Heart left ventricle (tissue), 16 donors: ENCODE measurements at regions of chr1 and their contacts with region 1.

Region 1: DNA sequence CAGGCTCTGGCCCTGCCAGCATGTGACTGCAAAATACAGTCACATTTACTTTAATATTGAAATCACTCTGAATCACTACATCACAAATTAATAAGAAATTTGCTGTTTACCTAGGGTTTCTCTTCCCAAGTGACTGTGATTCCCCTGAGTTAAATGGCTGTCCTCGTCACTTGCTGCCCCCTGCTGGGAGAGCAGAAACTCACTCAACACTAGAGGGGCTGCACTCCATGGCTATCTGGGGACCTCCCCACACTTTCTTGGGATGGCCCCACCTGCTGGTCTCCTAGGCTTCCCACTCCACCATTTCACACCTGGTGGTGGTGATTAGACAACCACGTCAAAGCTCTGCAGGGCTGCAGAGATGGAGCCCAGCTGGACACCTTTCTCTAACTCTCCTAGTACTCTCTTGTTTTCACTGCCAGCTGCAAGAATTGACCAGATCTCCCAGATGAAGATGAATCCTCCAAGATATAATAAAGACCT is 63.4 kb downstream of the CD2 start:
- DNase-seq: no peak
- ATAC-seq: peak in 1 of 4 donors; percentile 49
- H3K4me3 ChIP-seq: no peak overlapping the region
- H3K27ac ChIP-seq: no peak overlapping the region
- H3K4me1 ChIP-seq: peaks cover 0 to 6% (median 0%) of the 10 kb centered on the region in 12 donors
- H3K27me3 ChIP-seq: no peaks in the 10 kb centered on the region
- CTCF ChIP-seq: peak in 10 of 12 donors; percentile 28 to 65 (median 40)
- POLR2A ChIP-seq: no peak

Region 2: DNA sequence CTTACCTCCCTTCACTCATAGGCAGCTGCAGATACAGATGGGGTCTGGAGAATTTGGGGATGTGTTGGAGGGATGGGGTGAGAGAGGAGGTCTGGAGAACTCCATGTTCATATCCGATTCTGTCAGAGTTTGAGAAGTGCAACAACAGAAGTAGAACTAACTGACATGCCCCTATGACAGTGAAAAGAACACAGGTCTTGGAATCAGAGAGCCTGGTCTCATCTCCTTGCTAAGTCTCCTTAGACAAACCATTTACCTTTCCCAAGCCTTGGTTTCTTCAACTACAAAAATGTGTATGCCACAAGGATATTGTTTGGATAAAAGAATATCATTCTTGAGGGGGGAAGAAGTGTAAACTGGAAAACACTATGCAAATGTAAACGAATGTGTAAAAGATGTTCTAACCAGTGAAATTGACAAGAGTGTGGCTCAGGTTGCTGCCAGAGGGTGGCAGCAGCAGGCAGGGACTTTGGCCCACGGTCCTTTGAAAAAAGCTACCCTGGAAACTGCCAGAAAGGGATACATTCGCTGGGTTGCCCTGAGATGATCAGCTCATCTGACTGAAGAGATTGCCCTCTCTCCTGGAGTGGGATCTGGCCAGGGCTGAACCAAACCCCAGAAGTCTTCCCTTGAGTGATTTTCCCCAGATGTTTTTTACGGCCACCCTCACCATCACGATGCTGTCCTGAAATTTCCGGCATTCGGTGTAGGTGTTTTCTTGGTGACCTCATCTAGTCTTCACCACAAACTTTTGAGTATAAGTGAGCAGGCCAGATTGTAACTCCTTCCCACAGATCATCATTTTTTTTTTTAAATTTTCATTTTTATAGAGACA is 80.4 kb before region 1 on chr1:
- intact Hi-C with region 1: loop called in 1 of 10 experiments (anchors 5 kb)
- DNase-seq: peak in 4 of 5 donors; percentile 28 to 63 (median 39)
- ATAC-seq: peak in 3 of 4 donors; percentile 60 to 78 (median 70)
- H3K4me3 ChIP-seq: no peak overlapping the region
- H3K27ac ChIP-seq: peak overlapping the region in 1 of 12 donors; percentile 83
- H3K4me1 ChIP-seq: peaks cover 0 to 31% (median 0%) of the 10 kb centered on the region in 12 donors
- H3K27me3 ChIP-seq: no peaks in the 10 kb centered on the region
- CTCF ChIP-seq: peak; percentile 49 to 84 (median 71)
- POLR2A ChIP-seq: no peak

Region 3: DNA sequence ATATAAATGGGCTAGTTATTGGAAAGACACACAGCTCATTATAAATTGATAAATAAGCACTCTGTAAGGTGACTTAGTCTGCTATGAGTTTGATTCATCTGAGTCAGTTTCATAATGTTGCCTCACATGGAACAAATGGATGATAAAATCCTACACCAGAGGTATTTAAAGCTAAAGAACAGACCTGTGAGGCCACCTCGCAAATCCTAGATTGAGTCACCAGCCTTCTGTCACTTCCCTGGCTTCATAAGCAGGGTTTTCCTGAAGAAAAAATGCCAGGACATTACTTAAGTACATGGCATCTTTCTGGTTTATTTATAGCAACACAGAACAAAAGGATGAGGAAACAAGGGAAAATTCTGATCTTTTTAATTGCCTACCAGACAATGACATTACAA is 45.0 kb before region 1 on chr1:
- intact Hi-C with region 1: loop called in 1 of 10 experiments (anchors 5 kb)
- DNase-seq: no peak
- ATAC-seq: no peak
- H3K4me3 ChIP-seq: no peak overlapping the region
- H3K27ac ChIP-seq: no peak overlapping the region
- H3K4me1 ChIP-seq: peaks cover 0 to 34% (median 0%) of the 10 kb centered on the region in 12 donors
- H3K27me3 ChIP-seq: peaks cover 0 to 6% (median 0%) of the 10 kb centered on the region in 9 donors
- CTCF ChIP-seq: no peak
- POLR2A ChIP-seq: no peak